ENCODE measurements at regions of chr10 and their contacts with region 1.

Region 1: DNA sequence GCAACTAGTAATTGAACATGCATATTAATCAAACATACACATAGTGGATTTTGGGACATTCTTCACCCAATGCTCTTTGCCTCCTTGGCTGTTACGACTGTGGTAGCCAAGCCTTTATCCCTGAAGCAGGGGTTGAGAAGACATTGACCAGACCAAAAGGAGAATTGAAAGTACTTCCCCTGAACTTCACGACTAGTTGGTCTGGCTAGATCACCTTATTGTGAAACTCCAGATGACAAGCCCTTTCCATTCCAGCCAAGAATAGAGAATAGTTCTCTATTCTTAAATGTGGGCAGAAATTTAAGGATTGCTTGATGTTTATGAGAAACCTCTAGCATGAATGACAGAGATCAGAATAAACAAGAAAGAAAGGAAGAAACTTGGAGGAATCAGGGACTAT is 97.0 kb downstream of the LRMDA start:
- DNase-seq: no peak
- H3K4me3 ChIP-seq: no peak overlapping the region
- CTCF ChIP-seq: no peak
- POLR2A ChIP-seq: no peak

Region 2: DNA sequence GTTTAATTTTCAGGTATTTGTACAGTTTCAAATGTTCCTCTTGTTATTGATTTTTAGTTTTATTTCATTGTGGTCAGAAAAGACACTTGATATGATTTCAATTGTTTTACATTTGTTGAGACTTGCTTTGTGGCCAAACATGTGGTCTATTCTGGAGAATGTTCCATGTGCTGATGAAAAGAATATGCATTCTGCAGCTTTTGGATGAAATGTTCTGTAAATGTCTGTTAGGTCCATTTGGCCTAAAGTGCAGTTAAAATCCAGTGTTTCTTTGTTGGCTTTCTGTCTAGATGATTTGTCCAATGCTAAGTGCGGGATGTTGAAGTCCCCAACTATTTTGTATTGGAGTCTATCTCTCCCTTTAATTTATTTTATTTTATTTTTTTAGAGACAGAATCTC is 197.3 kb before region 1 on chr10:
- intact Hi-C with region 1: no loop called
- DNase-seq: no peak
- H3K4me3 ChIP-seq: no peak overlapping the region
- CTCF ChIP-seq: no peak
- POLR2A ChIP-seq: no peak

Region 3: DNA sequence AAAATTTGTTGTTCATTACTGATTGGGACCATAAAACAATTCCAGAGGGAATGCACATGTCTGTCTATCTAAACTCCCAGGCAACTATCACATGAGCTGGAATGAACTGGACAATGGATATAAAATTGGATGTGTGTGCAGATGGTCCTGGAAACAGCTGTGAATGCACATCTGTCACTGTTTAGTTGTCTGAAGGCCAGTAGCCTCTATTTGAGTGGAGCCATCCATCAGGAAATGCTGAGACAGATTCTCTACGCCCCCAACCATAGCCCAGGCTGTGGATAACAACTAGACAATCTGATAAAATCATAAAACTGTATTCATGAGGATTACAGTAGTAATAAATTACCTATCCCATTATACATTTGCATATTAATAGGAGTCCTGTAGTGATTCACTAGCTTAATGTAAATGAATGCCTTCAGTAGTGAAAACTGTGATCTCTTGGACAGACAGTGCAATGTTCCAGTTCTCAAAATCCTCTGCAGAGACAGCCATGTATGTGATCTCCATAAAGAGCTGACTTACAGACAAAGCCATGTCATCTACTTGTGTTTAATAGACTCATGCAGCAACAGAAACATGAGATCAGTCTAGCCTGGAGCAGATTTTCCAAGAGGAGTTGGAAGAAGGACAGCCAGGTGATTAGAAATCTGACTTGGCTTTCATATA is 1201.6 kb after region 1 on chr10:
- intact Hi-C with region 1: loop called (anchors 5 kb)
- DNase-seq: no peak
- H3K4me3 ChIP-seq: no peak overlapping the region
- CTCF ChIP-seq: no peak
- POLR2A ChIP-seq: no peak